Activated CD8-positive, alpha-beta T cell treated with anti-CD3 and anti-CD28 coated beads for 36 hours (primary cell): ENCODE measurements at regions of chr5 and their contacts with region 1.

Region 1: GRCh38 chr5:148740966-148741742 is 85.3 kb upstream of the ADRB2 start:
- DNase-seq: no peak
- ATAC-seq: peak; percentile 55
- H3K4me3 Mint-ChIP-seq: no peak overlapping the region
- H3K27ac Mint-ChIP-seq: no peak overlapping the region
- H3K4me1 Mint-ChIP-seq: no peaks in the 10 kb centered on the region
- H3K27me3 Mint-ChIP-seq: peaks cover 15% of the 10 kb centered on the region
- CTCF ChIP-seq: peak; percentile 76

Region 2: GRCh38 chr5:148708854-148709253 is 32.3 kb before region 1 on chr5:
- CTCF ChIA-PET with region 1: no interaction called
- POLR2A ChIA-PET with region 1: no interaction called
- intact Hi-C with region 1: no loop called
- DNase-seq: peak; percentile 69
- ATAC-seq: peak; percentile 97
- H3K4me3 Mint-ChIP-seq: no peak overlapping the region
- H3K27ac Mint-ChIP-seq: peak overlapping the region; percentile 55
- H3K4me1 Mint-ChIP-seq: peaks cover 35% of the 10 kb centered on the region
- H3K27me3 Mint-ChIP-seq: peaks cover 26% of the 10 kb centered on the region
- CTCF ChIP-seq: no peak

Region 3: GRCh38 chr5:148805326-148806290 is 64.5 kb after region 1 on chr5:
- CTCF ChIA-PET with region 1: interaction called, 16 read pairs
- POLR2A ChIA-PET with region 1: no interaction called
- intact Hi-C with region 1: no loop called
- DNase-seq: peak; percentile 78
- ATAC-seq: peak; percentile 45
- H3K4me3 Mint-ChIP-seq: no peak overlapping the region
- H3K27ac Mint-ChIP-seq: peak overlapping the region; percentile 79
- H3K4me1 Mint-ChIP-seq: peaks cover 65% of the 10 kb centered on the region
- H3K27me3 Mint-ChIP-seq: peaks cover 7% of the 10 kb centered on the region
- CTCF ChIP-seq: no peak

Region 4: DNA sequence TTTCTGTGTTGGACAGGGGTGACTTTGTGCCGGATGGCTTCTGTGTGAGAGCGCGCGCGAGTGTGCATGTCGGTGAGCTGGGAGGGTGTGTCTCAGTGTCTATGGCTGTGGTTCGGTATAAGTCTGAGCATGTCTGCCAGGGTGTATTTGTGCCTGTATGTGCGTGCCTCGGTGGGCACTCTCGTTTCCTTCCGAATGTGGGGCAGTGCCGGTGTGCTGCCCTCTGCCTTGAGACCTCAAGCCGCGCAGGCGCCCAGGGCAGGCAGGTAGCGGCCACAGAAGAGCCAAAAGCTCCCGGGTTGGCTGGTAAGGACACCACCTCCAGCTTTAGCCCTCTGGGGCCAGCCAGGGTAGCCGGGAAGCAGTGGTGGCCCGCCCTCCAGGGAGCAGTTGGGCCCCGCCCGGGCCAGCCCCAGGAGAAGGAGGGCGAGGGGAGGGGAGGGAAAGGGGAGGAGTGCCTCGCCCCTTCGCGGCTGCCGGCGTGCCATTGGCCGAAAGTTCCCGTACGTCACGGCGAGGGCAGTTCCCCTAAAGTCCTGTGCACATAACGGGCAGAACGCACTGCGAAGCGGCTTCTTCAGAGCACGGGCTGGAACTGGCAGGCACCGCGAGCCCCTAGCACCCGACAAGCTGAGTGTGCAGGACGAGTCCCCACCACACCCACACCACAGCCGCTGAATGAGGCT is 85.0 kb after region 1 on chr5 and contains the start of gene ADRB2:
- CTCF ChIA-PET with region 1: interaction called, 25 read pairs
- POLR2A ChIA-PET with region 1: no interaction called
- intact Hi-C with region 1: loop called (anchors 5 kb)
- DNase-seq: peak; percentile 92
- ATAC-seq: peak; percentile 94
- H3K4me3 Mint-ChIP-seq: peak within 1 kb of the TSS; percentile 83
- H3K27ac Mint-ChIP-seq: peak within 1 kb of the TSS; percentile 76
- H3K4me1 Mint-ChIP-seq: peaks cover 28% of the 10 kb centered on the region
- H3K27me3 Mint-ChIP-seq: peaks cover 12% of the 10 kb centered on the region
- CTCF ChIP-seq: no peak
- total RNA-seq, gene ADRB2: 0.81 to 0.98 TPM

Region 5: GRCh38 chr5:148979104-148979723 is 238.1 kb after region 1 on chr5:
- CTCF ChIA-PET with region 1: interaction called, 16 read pairs
- POLR2A ChIA-PET with region 1: no interaction called
- intact Hi-C with region 1: no loop called
- DNase-seq: no peak
- ATAC-seq: no peak
- H3K4me3 Mint-ChIP-seq: no peak overlapping the region
- H3K27ac Mint-ChIP-seq: no peak overlapping the region
- H3K4me1 Mint-ChIP-seq: no peaks in the 10 kb centered on the region
- H3K27me3 Mint-ChIP-seq: peaks cover 7% of the 10 kb centered on the region
- CTCF ChIP-seq: no peak